ENCODE measurements at regions of chr7 and their contacts with region 1.

Region 1: GRCh38 chr7:464454-465401 is 54.9 kb downstream of the PDGFA start:
- DNase-seq: no peak
- ATAC-seq: no peak
- H3K4me3 ChIP-seq: no peak overlapping the region
- H3K27ac ChIP-seq: no peak overlapping the region
- H3K4me1 ChIP-seq: peaks cover 8 to 53% of the 10 kb centered on the region in 2 experiments; a peak in 4 of 5 replicates
- H3K27me3 ChIP-seq: peaks cover 0 to 2% of the 10 kb centered on the region in 2 experiments; a peak in 3 of 5 replicates
- CTCF ChIP-seq: no peak
- EP300 ChIP-seq: no peak
- POLR2A ChIP-seq: no peak
- RAD21 ChIP-seq: no peak

Region 2: DNA sequence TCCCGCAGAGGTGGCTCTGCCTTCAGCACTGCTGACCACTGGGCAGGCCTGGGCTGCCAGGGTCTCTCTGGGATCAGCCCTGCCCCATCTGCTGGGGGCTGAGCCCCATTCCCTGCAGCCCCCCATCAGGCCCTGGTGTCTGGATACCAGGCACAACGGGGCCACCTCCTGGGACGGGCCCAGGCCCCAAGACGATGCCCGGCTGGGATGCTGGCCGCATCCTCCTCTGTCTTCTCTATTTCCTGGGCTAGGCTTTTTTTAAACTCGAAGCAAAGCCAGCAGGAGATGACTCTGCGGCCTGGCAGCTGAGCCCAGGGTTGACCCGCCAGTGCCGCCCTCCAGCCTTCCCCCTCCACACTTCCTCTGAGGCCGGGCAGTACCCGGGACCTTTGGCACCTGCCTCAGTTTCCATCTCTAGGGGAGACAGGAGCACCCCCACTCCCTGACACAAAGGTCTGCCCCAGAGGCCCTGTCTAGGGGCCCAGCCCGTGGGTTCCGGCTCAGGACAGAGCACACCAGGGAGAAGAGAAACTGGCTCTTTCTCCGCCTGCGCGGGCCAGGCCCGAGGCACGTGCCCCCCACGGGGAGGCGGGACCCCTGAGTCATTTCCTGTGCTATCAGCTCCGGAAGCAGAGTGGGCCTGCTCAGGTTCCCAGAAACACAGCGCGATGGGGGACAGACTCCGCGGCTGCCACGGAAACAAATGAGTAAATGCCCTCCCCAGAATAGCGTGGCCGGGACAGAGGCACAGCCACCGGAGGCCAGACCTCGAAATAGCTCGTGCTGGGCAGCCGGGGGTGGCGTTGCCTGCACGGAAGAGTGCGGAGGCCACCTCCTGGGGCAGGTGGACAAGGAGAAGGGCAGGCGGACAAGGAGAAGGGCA is 139.5 kb after region 1 on chr7:
- CTCF ChIA-PET with region 1: no interaction called
- POLR2A ChIA-PET with region 1: no interaction called
- in situ Hi-C with region 1: no loop called
- intact Hi-C with region 1: loop called (anchors 10 kb)
- DNase-seq: peak; percentile 74 to 96 (median 80)
- ATAC-seq: peak; percentile 87
- H3K4me3 ChIP-seq: peak overlapping the region; percentile 41
- H3K27ac ChIP-seq: peak overlapping the region; percentile 100
- H3K4me1 ChIP-seq: peaks cover 47 to 70% of the 10 kb centered on the region in 2 experiments
- H3K27me3 ChIP-seq: no peaks in the 10 kb centered on the region
- CTCF ChIP-seq: 0 out of 6 replicates have a peak, but pooled peaks of 1 of the 3 experiments have one; percentile 7
- EP300 ChIP-seq: peak; percentile 89
- POLR2A ChIP-seq: peak; percentile 86
- RAD21 ChIP-seq: 0 out of 4 replicates have a peak, but pooled peaks of 1 of the 2 experiments have one; percentile 16

Measured in K562 (cell line).